ENCODE measurements at regions of chr6 and their contacts with region 1.

Region 1: DNA sequence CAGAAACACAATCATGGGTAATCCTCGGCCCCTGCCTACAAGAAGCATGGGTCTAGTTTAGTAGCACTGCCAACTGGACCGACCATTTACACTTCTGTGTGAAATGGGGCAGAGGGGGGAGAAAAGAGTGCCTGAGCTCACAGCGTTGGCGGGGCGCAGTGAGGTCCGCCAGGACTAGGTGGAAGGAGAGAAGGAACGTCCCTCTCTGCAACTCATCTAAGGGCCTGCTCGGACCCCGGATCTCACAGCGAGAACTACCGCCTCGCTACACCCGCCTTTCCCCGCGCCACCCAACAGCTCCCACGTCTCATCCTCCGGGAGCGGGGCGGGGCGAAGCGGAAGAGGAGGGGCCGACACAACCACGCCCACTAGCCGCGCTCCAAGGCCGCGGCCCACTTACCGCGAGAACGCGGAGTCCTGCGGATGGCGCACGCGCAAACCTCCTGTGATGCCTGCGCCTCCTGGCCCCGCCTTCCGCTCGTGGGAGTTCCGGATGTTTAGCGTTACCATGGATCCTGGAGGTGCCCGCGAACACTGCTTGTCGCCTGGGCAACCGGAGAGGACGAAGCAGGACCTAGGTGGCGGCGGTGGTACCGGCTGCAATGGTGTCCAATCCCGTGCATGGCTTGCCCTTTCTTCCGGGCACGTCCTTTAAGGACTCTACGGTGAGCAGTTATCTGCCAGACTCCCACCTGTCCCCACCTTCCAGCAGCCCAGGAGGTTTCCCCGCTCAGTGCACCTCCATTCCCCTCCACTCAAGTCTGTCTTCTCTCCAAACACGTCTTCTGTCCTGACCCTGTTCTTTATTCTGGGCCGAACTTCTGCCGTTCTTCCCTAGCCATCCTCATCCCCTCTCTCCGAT is at the start of gene EFHC1:
- DNase-seq: peak; percentile 96 to 99 (median 98)
- ATAC-seq: peak; percentile 91
- H3K4me3 ChIP-seq: peak within 1 kb of the TSS; percentile 73 to 81
- H3K4me3 Mint-ChIP-seq: no peak within 1 kb of the TSS
- H3K27ac ChIP-seq: peak within 1 kb of the TSS; percentile 70 to 87
- H3K27ac Mint-ChIP-seq: peak within 1 kb of the TSS; percentile 69
- H3K4me1 ChIP-seq: peaks cover 19% of the 10 kb centered on the region
- H3K4me1 Mint-ChIP-seq: peaks cover 24% of the 10 kb centered on the region
- H3K27me3 ChIP-seq: no peaks in the 10 kb centered on the region
- H3K27me3 Mint-ChIP-seq: no peaks in the 10 kb centered on the region
- CTCF ChIP-seq: no peak
- total RNA-seq, gene EFHC1: 5.1 to 6.9 TPM

Region 2: DNA sequence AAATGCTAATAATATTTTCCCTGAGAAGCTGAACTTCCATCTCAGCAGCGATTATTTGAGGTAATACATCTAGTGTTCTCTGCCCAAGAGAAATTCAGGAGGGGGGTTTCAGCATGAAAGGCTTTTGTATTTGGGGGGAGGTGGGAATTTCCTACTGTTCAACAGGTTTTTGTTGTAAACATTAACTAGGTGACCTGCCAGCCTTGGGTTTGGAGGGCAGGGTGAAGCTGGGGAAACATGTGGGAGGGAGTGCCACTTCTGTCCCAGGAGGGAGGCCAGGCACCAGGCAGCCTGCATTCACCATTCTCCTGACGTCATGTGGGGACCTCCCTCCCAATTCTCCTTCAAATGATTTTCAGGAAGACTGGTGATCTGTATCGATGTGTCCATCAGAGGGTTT is 294.9 kb before region 1 on chr6:
- CTCF ChIA-PET with region 1: no interaction called
- POLR2A ChIA-PET with region 1: no interaction called
- intact Hi-C with region 1: no loop called
- DNase-seq: no peak
- ATAC-seq: no peak
- H3K4me3 ChIP-seq: no peak overlapping the region
- H3K4me3 Mint-ChIP-seq: no peak overlapping the region
- H3K27ac ChIP-seq: no peak overlapping the region
- H3K27ac Mint-ChIP-seq: no peak overlapping the region
- H3K4me1 ChIP-seq: no peaks in the 10 kb centered on the region
- H3K4me1 Mint-ChIP-seq: no peaks in the 10 kb centered on the region
- H3K27me3 ChIP-seq: no peaks in the 10 kb centered on the region
- H3K27me3 Mint-ChIP-seq: peaks cover 37% of the 10 kb centered on the region
- CTCF ChIP-seq: no peak

Region 3: DNA sequence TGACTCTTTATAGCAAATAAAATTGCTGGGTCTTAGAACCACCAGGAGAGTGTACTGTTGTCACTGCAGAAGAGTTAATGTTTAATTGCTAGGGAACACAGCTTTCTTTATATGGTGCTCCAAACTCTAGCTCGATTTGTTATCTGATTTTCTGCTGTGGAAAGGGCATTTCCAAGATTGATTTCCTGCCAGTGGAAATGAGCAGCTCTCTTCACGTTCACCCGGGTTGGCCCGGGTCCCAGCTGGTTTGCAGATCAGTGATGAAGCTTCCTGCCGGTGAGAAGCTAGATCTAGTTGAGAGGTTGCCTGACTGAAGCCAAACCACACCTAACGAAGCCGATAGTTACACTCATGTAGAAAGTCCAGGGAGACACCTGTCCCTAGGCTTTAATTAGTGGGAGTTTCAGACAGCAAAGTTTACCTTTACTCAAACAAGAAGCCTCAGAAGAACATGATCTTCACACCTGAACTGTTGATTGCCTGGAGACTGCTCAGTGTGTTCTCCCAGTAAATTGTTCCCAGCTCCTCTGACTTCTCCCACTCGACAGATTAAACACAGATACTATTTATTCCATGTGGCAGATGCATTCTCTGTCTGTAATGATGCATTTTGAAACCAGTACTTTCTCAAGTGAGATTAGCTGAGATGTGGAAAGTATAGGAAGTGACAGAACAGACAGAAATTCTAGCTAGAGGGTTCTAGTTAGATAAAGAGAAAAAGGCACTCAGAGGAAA is 30.2 kb before region 1 on chr6:
- CTCF ChIA-PET with region 1: interaction called, 8 read pairs
- POLR2A ChIA-PET with region 1: interaction called, 5 read pairs
- intact Hi-C with region 1: loop called (anchors 1 kb)
- DNase-seq: peak in 8 of 9 experiments; percentile 37 to 84 (median 69)
- ATAC-seq: peak; percentile 39
- H3K4me3 ChIP-seq: peak overlapping the region; percentile 36 to 44
- H3K4me3 Mint-ChIP-seq: peak overlapping the region; percentile 83
- H3K27ac ChIP-seq: peak overlapping the region; percentile 78 to 79
- H3K27ac Mint-ChIP-seq: peak overlapping the region; percentile 98
- H3K4me1 ChIP-seq: peaks cover 71% of the 10 kb centered on the region
- H3K4me1 Mint-ChIP-seq: peaks cover 86% of the 10 kb centered on the region
- H3K27me3 ChIP-seq: no peaks in the 10 kb centered on the region
- H3K27me3 Mint-ChIP-seq: no peaks in the 10 kb centered on the region
- CTCF ChIP-seq: peak; percentile 30

Region 4: DNA sequence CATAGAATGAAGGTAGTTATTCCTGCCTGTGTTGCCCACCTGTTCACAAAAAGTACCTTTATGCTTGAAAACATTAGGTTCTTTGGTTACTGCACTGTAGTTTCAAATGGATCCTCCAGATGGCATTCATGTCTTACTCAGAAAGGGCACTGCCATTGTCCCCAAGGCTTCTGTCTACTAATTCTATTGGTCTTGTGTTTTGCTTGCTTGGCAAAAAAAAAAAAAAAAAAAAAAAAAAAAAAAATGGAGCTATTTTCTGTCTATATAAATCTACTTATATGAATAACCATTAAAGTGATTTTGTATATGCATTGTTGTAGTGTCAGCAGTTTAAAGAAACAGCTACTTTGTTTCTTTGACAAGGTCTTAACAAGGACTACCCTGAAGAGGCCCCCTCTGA is 12.6 kb before region 1 on chr6:
- CTCF ChIA-PET with region 1: interaction called, 69 read pairs
- POLR2A ChIA-PET with region 1: no interaction called
- intact Hi-C with region 1: loop called in 1 of 2 experiments (anchors 1 kb)
- DNase-seq: peak in 2 of 9 experiments; percentile 53 to 68
- ATAC-seq: peak; percentile 93
- H3K4me3 ChIP-seq: no peak overlapping the region
- H3K4me3 Mint-ChIP-seq: no peak overlapping the region
- H3K27ac ChIP-seq: no peak overlapping the region
- H3K27ac Mint-ChIP-seq: peak overlapping the region; percentile 70
- H3K4me1 ChIP-seq: no peaks in the 10 kb centered on the region
- H3K4me1 Mint-ChIP-seq: peaks cover 38% of the 10 kb centered on the region
- H3K27me3 ChIP-seq: no peaks in the 10 kb centered on the region
- H3K27me3 Mint-ChIP-seq: no peaks in the 10 kb centered on the region
- CTCF ChIP-seq: peak; percentile 48

Region 5: GRCh38 chr6:52598123-52598823 is 178.2 kb after region 1 on chr6:
- CTCF ChIA-PET with region 1: interaction called, 23 read pairs
- POLR2A ChIA-PET with region 1: no interaction called
- intact Hi-C with region 1: loop called (anchors 1 to 5 kb)
- DNase-seq: peak in 4 of 9 experiments; percentile 30 to 58 (median 40)
- ATAC-seq: peak; percentile 62
- H3K4me3 ChIP-seq: no peak overlapping the region
- H3K4me3 Mint-ChIP-seq: no peak overlapping the region
- H3K27ac ChIP-seq: no peak overlapping the region
- H3K27ac Mint-ChIP-seq: no peak overlapping the region
- H3K4me1 ChIP-seq: no peaks in the 10 kb centered on the region
- H3K4me1 Mint-ChIP-seq: peaks cover 8% of the 10 kb centered on the region
- H3K27me3 ChIP-seq: no peaks in the 10 kb centered on the region
- H3K27me3 Mint-ChIP-seq: peaks cover 12% of the 10 kb centered on the region
- CTCF ChIP-seq: no peak

Region 6: DNA sequence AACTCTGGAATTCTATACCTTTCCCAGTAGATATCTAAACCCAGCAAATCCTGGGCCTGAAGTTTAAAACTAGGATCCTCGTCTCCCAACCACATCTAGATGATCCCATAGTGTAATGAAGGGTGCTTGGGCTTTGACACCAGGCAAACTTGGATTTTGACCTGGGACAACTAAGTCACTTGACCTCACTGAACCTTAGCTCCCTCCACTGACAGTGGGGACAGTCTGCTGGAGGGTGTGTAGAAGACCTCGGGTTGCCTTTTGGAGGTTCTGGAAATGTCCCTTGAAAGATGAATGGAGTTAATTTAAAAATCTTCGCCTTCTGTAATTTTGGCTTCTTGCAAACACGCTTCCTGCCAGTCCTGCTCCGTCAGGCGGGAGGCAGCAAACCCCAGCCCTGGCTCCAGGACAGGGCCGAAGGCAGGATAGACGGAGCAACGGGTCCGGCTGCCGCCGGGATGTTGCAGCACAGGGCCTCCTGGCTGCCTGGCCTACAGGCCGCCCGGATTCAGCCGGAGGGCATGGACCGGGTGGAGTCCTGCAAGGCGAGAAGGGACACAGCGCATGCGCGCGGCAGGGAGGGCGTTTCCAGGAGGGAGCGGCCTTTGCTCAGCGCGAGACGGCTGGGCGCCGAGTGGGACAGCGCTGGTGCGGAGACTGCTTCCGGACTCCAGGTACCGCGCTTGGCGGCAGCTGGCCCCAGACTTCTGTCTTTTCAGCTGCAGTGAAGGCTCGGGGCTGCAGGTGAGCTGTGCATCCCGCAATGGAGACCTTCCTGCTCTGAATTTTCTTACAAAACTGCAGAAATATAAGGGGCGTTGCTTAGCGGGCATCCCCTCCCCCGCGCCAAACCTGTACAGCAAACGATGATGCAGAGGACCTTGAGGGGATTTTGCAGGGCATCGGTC is 250.7 kb after region 1 on chr6 and contains the start of gene TMEM14A:
- CTCF ChIA-PET with region 1: interaction called, 5 read pairs
- POLR2A ChIA-PET with region 1: no interaction called
- intact Hi-C with region 1: loop called in 1 of 2 experiments (anchors 1 kb)
- DNase-seq: peak; percentile 75 to 96 (median 90)
- ATAC-seq: peak; percentile 97
- H3K4me3 ChIP-seq: peak within 1 kb of the TSS; percentile 78 to 83
- H3K4me3 Mint-ChIP-seq: peak within 1 kb of the TSS; percentile 90
- H3K27ac ChIP-seq: peak within 1 kb of the TSS; percentile 28 to 36
- H3K27ac Mint-ChIP-seq: peak within 1 kb of the TSS; percentile 81
- H3K4me1 ChIP-seq: peaks cover 13% of the 10 kb centered on the region
- H3K4me1 Mint-ChIP-seq: peaks cover 30% of the 10 kb centered on the region
- H3K27me3 ChIP-seq: no peaks in the 10 kb centered on the region
- H3K27me3 Mint-ChIP-seq: no peaks in the 10 kb centered on the region
- CTCF ChIP-seq: no peak
- total RNA-seq, gene TMEM14A: 1.7 to 1.8 TPM

Region 7: DNA sequence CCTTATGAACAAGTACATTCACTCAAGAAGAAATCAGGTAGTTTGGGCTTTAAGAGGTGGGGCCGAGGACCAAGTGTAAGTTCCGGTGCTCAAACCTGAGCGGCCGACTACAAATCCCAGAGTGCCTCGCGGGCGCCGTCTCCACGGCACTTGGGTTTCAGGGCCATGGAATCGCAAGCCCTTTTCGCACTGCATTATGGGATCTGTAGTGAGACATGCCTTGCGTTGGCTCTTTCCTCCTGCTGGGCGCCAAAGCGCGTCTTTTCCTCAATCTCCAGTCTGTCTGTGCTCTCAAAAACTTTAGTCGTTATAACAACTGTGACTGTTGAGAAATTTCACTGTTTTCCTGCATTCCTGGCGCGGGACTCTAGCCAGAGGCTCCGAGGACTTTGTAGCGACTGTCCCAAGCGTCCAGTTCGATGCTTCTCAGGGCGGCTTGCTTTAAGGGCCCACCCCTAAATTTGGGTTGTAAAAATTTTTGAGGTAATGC is 644.7 kb after region 1 on chr6:
- CTCF ChIA-PET with region 1: no interaction called
- POLR2A ChIA-PET with region 1: no interaction called
- intact Hi-C with region 1: loop called (anchors 1 to 2 kb)
- DNase-seq: peak; percentile 90 to 98 (median 96)
- ATAC-seq: peak; percentile 83
- H3K4me3 ChIP-seq: peak overlapping the region; percentile 79 to 83
- H3K4me3 Mint-ChIP-seq: peak overlapping the region; percentile 100
- H3K27ac ChIP-seq: peak overlapping the region; percentile 55 to 81
- H3K27ac Mint-ChIP-seq: peak overlapping the region; percentile 98
- H3K4me1 ChIP-seq: peaks cover 39% of the 10 kb centered on the region
- H3K4me1 Mint-ChIP-seq: peaks cover 60% of the 10 kb centered on the region
- H3K27me3 ChIP-seq: no peaks in the 10 kb centered on the region
- H3K27me3 Mint-ChIP-seq: no peaks in the 10 kb centered on the region
- CTCF ChIP-seq: no peak

Region 8: GRCh38 chr6:53651764-53652401 is 1231.8 kb after region 1 on chr6:
- CTCF ChIA-PET with region 1: no interaction called
- POLR2A ChIA-PET with region 1: no interaction called
- intact Hi-C with region 1: loop called in 1 of 2 experiments (anchors 5 kb)
- DNase-seq: peak; percentile 57 to 91 (median 79)
- ATAC-seq: peak; percentile 86
- H3K4me3 ChIP-seq: peak overlapping the region; percentile 67 to 81
- H3K4me3 Mint-ChIP-seq: peak overlapping the region; percentile 91
- H3K27ac ChIP-seq: peak overlapping the region; percentile 54 to 65
- H3K27ac Mint-ChIP-seq: peak overlapping the region; percentile 89
- H3K4me1 ChIP-seq: peaks cover 32% of the 10 kb centered on the region
- H3K4me1 Mint-ChIP-seq: peaks cover 32% of the 10 kb centered on the region
- H3K27me3 ChIP-seq: no peaks in the 10 kb centered on the region
- H3K27me3 Mint-ChIP-seq: no peaks in the 10 kb centered on the region
- CTCF ChIP-seq: no peak

Region 9: DNA sequence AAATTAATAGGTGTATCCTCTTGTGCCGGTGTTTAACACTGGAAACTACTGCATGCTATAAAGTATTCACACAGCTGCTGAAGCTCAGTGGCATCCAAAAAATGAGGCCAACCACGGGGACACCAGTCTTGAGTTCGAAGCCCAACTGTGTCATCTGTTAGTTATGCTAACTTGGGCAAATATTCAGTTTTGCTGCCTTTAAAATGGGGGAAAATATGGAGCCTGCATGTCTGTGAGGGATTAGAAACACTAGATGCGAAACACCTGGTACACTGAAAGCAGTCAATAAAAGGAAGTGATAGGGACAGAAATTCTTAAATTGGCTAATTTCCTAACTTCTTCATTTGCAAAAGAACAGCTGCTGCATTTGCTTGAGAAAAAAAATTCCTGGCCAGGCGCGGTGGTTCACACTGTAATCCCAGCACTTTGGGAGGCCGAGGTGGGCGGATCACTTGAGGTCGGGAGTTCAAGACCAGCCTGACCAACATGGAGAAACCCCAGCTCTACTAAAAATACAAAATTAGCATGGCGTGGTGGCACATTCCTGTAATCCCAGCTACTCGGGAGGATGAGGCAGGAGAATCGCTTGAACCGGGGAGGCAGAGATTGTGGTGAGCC is 1654.6 kb after region 1 on chr6:
- CTCF ChIA-PET with region 1: no interaction called
- POLR2A ChIA-PET with region 1: no interaction called
- intact Hi-C with region 1: no loop called
- DNase-seq: no peak
- ATAC-seq: no peak
- H3K4me3 ChIP-seq: no peak overlapping the region
- H3K4me3 Mint-ChIP-seq: no peak overlapping the region
- H3K27ac ChIP-seq: no peak overlapping the region
- H3K27ac Mint-ChIP-seq: no peak overlapping the region
- H3K4me1 ChIP-seq: no peaks in the 10 kb centered on the region
- H3K4me1 Mint-ChIP-seq: no peaks in the 10 kb centered on the region
- H3K27me3 ChIP-seq: no peaks in the 10 kb centered on the region
- H3K27me3 Mint-ChIP-seq: peaks cover 5% of the 10 kb centered on the region
- CTCF ChIP-seq: no peak

Measured in CD8-positive, alpha-beta T cell (primary cell).